ENCODE measurements at regions of chrX and their contacts with region 1.

Region 1: GRCh38 chrX:24024819-24025740 is 1.9 kb downstream of the KLHL15 start:
- DNase-seq: peak; percentile 92
- H3K4me3 Mint-ChIP-seq: peak overlapping the region; percentile 85
- H3K27ac Mint-ChIP-seq: peak overlapping the region; percentile 86
- H3K4me1 Mint-ChIP-seq: peaks cover 15% of the 10 kb centered on the region
- H3K27me3 Mint-ChIP-seq: peaks cover 2% of the 10 kb centered on the region

Region 2: DNA sequence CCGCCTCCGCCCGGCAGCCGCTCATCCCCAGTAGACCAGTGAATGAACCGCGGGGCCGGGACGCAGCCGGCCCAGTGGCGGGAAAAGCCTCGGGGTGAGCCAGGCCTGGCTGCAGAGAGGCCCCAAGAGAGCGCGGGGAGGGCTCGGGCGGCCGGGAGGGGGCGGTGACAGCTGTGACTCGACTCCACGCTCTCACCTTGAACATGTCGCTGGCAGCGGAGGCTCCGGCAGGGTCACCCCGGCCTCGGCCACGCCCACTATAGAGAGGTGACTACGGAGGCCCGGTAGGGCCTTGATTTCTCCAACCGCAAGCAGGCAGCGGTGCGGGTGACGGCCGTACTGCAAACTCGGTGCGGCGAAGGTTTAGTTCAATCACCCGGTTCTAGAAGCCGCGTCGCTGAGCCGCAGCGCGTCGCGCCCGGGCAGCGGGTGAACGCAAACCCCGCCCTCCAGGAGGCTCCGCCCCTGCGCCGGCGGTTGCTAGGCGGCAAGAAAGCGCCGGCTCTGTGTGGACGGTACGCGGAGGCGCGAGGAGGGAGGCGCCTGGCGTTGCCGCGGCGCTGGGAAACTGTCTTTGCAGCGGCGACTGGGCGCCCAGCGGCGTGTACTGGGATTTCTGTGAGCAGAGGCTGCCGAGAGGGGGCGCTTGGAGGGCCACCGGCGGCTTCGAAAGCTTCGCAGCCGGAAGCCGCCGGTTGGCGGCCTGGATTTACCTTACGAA is 117.4 kb before region 1 on chrX and contains the starts of genes APOO and CXorf58:
- intact Hi-C with region 1: loop called (anchors 1 kb)
- DNase-seq: peak; percentile 97
- H3K4me3 Mint-ChIP-seq: peak within 1 kb of the TSS; percentile 82
- H3K27ac Mint-ChIP-seq: peak within 1 kb of the TSS; percentile 88
- H3K4me1 Mint-ChIP-seq: peaks cover 17% of the 10 kb centered on the region
- H3K27me3 Mint-ChIP-seq: no peaks in the 10 kb centered on the region
- total RNA-seq, gene APOO: 27.1 and 33.7 TPM in 2 replicates
- total RNA-seq, gene CXorf58: not detected in 2 replicates

Region 3: DNA sequence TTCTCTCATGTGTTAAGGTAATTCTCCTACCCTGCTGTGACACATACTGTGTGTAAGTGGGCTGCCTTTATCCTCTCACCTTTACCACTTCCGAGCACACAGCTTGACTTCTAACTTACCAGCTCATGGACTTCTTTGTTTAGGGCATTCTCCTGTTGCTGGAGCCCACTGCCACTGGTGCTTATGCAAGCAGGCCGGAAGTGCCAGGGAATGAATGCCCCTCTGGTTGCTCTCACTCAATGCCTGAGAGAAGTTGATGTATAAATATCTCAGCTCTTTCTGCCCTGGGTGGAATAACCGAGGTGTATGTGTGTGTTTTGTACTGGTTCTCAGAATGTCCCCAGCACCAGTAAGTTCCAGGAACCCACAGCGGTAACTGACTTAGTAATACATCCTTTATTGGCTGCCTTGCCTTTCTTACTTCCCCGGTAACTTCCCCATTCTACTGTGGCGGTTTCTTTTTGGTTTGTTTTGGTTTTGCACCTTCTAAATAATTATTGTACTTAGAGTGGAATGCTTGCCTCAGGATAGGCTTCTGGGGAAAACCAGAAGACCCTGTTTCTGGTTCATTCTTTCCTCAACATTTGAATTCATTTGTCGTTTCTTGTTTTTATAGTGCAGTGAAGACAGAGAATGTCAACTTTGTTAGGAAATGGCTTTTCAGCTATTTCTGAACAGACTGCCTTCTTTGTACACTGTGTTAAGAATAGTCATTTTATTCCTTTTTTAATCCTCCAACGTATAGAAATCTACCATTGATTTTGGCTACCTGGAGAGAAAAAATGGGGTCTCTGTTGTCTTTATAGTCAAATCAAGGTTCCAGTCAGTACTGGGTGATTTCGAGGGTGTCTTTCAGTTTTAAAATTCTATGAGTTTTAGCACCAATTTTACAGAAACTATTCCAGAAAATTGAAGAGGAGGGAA is 71.8 kb before region 1 on chrX:
- intact Hi-C with region 1: loop called (anchors 5 kb)
- DNase-seq: peak; percentile 83
- H3K4me3 Mint-ChIP-seq: peak overlapping the region; percentile 89
- H3K27ac Mint-ChIP-seq: peak overlapping the region; percentile 97
- H3K4me1 Mint-ChIP-seq: peaks cover 12% of the 10 kb centered on the region
- H3K27me3 Mint-ChIP-seq: no peaks in the 10 kb centered on the region

Region 4: GRCh38 chrX:24014388-24015018 is 10.6 kb before region 1 on chrX:
- intact Hi-C with region 1: loop called (anchors 1 kb)
- DNase-seq: peak; percentile 72
- H3K4me3 Mint-ChIP-seq: peak overlapping the region; percentile 69
- H3K27ac Mint-ChIP-seq: peak overlapping the region; percentile 86
- H3K4me1 Mint-ChIP-seq: peaks cover 32% of the 10 kb centered on the region
- H3K27me3 Mint-ChIP-seq: no peaks in the 10 kb centered on the region

Region 5: DNA sequence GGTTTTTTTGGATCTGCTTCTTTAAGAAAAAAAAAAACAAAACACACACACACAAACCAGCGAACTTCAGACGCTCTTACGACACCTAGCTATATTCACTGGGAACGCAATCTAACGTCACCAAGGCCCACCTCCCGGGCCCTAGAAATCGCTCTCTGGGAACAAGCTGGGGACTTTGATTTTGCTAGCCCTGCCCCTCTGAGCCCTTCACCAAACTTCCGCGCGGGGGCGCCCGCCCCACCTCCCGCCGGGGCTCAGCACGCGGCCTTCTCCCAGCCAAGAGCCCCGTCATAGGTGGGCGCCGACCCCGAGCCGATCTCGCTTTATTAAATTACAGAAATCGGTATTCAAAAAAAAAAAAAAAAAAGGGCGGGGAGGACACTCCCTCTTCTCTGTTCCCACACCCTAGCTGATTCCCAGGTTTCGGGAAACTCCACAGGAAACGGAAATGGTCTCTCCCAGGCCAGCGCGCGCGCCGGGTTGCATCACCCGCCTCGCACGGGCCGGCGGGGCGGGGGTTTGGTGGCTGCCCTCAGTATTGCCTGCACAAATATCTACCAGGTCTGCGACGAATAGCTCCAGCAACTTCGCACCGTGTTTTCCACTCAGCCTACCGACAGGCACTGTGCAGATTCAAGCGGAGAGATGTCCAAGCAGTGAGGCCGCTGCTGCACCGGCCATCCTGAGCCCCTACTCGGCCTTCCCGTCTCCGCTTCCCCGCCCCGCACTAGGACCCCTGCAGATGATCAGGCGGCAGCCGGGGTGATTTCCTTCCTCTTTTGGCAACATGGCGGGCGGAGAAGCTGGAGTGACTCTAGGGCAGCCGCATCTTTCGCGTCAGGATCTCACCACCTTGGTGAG is 29.3 kb after region 1 on chrX and contains the start of gene EIF2S3:
- intact Hi-C with region 1: loop called (anchors 1 kb)
- DNase-seq: peak; percentile 95
- H3K4me3 Mint-ChIP-seq: no peak within 1 kb of the TSS
- H3K27ac Mint-ChIP-seq: peak within 1 kb of the TSS; percentile 100
- H3K4me1 Mint-ChIP-seq: peaks cover 6% of the 10 kb centered on the region
- H3K27me3 Mint-ChIP-seq: no peaks in the 10 kb centered on the region
- total RNA-seq, gene EIF2S3: 207 and 214 TPM in 2 replicates

Region 6: DNA sequence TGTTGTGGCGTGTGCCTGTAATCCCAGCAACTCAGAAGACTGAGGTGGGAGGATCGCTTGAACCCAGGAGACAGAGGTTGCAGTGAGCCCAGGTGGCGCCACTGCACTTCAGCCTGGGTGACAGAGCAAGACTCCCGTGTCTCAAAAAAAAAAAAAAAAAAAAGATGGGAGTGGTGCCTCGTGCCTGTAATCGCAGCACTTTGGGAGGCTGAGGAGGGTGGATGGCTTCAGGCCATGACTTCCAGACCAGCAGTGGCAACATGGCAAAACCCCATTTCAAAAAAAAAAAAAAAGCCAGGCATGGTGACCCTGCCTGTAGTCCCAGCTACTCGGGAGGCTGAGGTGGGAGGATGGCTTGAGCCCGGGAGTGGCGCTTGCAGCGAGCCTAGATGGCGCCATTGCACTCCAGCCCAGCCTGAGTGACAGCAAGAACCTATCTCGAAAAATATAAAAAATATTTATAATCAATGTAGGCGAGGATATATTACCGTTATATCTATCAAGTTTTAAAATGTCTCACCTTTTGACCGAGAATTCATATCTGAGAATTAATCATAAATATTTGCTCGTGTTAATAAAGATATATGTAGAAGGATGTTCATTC is 56.7 kb after region 1 on chrX:
- intact Hi-C with region 1: loop called (anchors 2 kb)
- DNase-seq: peak; percentile 82
- H3K4me3 Mint-ChIP-seq: peak overlapping the region; percentile 62
- H3K27ac Mint-ChIP-seq: peak overlapping the region; percentile 45
- H3K4me1 Mint-ChIP-seq: peaks cover 10% of the 10 kb centered on the region
- H3K27me3 Mint-ChIP-seq: no peaks in the 10 kb centered on the region